Mammary epithelial cell (primary cell): ENCODE measurements at regions of chr12 and their contacts with region 1.

Region 1: GRCh38 chr12:52327052-52327829 is 6.0 kb upstream of the KRT83 start:
- DNase-seq: peak; percentile 97
- H3K4me3 ChIP-seq: no peak overlapping the region
- H3K27ac ChIP-seq: peak overlapping the region; percentile 56
- H3K4me1 ChIP-seq: peaks cover 15% of the 10 kb centered on the region
- H3K27me3 ChIP-seq: no peaks in the 10 kb centered on the region
- CTCF ChIP-seq: peak; percentile 99 to 100

Region 2: GRCh38 chr12:52147367-52147972 is 179.8 kb before region 1 on chr12:
- CTCF ChIA-PET with region 1: interaction called, 13 read pairs
- dilution Hi-C with region 1: no loop called
- in situ Hi-C with region 1: no loop called
- intact Hi-C with region 1: loop called (anchors 1 kb)
- DNase-seq: peak; percentile 99
- H3K4me3 ChIP-seq: no peak overlapping the region
- H3K27ac ChIP-seq: peak overlapping the region; percentile 100
- H3K4me1 ChIP-seq: peaks cover 89% of the 10 kb centered on the region
- H3K27me3 ChIP-seq: no peaks in the 10 kb centered on the region
- CTCF ChIP-seq: no peak

Region 3: GRCh38 chr12:52213512-52214420 is 113.5 kb before region 1 on chr12:
- CTCF ChIA-PET with region 1: interaction called, 3 read pairs
- dilution Hi-C with region 1: no loop called
- in situ Hi-C with region 1: no loop called
- intact Hi-C with region 1: loop called (anchors 1 kb)
- DNase-seq: peak; percentile 79
- H3K4me3 ChIP-seq: no peak overlapping the region
- H3K27ac ChIP-seq: no peak overlapping the region
- H3K4me1 ChIP-seq: peaks cover 73% of the 10 kb centered on the region
- H3K27me3 ChIP-seq: no peaks in the 10 kb centered on the region
- CTCF ChIP-seq: peak; percentile 98 to 100

Region 4: DNA sequence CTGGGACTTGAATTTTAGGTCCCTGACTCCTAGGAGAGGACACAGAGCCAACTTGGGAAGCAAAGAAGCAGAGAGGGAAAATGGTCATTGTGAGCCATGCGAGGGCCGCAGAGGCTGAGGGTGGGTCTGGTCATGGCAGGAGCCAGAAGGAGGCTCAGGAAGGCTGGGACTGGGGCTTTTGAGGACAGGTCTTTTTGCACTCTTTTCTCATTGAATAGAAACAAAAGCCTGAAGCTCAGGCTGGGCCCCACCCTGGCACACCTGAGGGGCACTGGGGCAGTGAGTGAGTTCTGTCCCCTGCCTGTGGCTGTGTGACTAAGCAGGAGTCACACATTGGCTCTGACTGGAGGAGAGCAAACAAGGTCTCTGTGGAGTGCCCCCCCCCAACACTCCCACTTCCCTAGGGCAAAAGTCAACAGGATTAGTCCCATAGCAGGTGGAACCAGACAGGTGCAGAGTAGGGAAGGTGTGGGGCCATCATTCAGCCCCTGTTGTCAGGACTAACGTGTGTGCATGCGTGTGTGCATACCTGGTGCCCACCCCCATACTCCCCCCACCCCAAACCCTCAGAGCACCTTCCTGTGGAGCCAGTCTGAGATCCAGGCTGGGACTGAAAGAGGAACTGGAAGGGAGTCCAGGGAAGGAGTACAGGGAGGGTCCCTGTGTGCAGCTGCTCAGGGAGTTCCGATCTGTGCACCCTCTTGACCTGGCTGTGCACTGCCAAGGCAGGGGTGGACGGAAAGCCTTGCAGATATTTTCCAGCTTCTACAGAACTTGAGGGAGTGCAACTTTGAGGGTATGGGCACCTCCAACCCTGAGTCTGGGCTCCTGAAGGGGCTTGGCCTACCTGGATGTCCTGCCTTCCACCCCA is 91.2 kb before region 1 on chr12:
- CTCF ChIA-PET with region 1: no interaction called
- dilution Hi-C with region 1: loop called (anchors 5 kb)
- in situ Hi-C with region 1: no loop called
- intact Hi-C with region 1: loop called (anchors 1 kb)
- DNase-seq: peak; percentile 51
- H3K4me3 ChIP-seq: peak overlapping the region; percentile 85 to 95 (median 93)
- H3K27ac ChIP-seq: peak overlapping the region; percentile 63
- H3K4me1 ChIP-seq: peaks cover 67% of the 10 kb centered on the region
- H3K27me3 ChIP-seq: no peaks in the 10 kb centered on the region
- CTCF ChIP-seq: no peak

Region 5: DNA sequence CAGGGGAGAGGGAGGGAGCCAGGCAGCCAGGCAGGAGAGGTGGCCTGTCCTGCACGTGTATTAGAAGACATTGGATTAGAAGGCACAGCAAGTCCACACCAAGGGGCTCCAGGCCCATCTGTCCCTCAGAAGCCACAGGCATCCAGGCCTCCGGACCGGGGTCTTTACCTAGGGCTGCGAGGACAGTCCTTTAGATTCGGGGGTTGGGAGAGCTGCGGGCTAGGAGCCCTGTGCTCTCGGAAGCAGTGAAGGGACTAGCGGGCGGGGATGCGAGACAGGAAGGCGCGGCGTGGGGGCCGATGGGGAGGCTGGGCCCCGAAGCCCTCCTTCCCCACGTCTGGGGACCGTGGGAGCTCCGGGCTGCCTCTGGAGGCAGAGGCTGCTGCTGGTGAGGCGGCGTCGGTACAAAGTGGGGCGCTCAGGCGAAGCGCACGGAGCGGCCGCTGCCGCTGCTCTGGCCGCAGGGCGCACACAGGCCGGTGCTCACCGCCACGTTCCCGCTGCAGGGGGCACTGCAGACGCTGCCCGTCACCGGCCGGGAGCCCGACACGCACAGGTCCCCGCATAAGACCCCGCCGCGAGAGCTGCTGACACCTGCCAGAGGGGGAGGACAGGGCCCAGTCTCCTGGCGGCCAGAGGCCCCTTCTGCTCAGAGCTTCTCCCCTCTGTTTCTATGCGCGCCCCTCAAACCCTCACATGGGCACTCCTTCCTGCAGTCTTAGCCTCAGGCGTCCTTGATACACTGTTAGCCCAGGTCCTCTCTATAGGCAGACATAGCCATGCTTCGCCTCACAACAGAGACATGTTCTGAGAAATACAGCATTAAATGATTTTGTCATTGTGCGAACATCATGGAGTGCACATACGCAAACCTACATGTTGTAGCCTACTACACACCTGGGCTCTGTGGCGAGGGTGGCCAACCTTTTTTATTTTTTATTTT is 76.9 kb before region 1 on chr12:
- CTCF ChIA-PET with region 1: no interaction called
- dilution Hi-C with region 1: no loop called
- in situ Hi-C with region 1: loop called in 1 of 2 experiments (anchors 5 kb)
- intact Hi-C with region 1: loop called (anchors 2 kb)
- DNase-seq: no peak
- H3K4me3 ChIP-seq: no peak overlapping the region
- H3K27ac ChIP-seq: no peak overlapping the region
- H3K4me1 ChIP-seq: peaks cover 6% of the 10 kb centered on the region
- H3K27me3 ChIP-seq: no peaks in the 10 kb centered on the region
- CTCF ChIP-seq: no peak

Region 6: GRCh38 chr12:52278541-52279421 is 48.5 kb before region 1 on chr12:
- CTCF ChIA-PET with region 1: interaction called, 6 read pairs
- dilution Hi-C with region 1: no loop called
- in situ Hi-C with region 1: loop called in 1 of 2 experiments (anchors 5 kb)
- intact Hi-C with region 1: loop called (anchors 1 kb)
- DNase-seq: peak; percentile 73
- H3K4me3 ChIP-seq: peak overlapping the region in 1 of 3 experiments; percentile 20
- H3K27ac ChIP-seq: peak overlapping the region; percentile 100
- H3K4me1 ChIP-seq: peaks cover 45% of the 10 kb centered on the region
- H3K27me3 ChIP-seq: no peaks in the 10 kb centered on the region
- CTCF ChIP-seq: peak; percentile 76 to 100

Region 7: DNA sequence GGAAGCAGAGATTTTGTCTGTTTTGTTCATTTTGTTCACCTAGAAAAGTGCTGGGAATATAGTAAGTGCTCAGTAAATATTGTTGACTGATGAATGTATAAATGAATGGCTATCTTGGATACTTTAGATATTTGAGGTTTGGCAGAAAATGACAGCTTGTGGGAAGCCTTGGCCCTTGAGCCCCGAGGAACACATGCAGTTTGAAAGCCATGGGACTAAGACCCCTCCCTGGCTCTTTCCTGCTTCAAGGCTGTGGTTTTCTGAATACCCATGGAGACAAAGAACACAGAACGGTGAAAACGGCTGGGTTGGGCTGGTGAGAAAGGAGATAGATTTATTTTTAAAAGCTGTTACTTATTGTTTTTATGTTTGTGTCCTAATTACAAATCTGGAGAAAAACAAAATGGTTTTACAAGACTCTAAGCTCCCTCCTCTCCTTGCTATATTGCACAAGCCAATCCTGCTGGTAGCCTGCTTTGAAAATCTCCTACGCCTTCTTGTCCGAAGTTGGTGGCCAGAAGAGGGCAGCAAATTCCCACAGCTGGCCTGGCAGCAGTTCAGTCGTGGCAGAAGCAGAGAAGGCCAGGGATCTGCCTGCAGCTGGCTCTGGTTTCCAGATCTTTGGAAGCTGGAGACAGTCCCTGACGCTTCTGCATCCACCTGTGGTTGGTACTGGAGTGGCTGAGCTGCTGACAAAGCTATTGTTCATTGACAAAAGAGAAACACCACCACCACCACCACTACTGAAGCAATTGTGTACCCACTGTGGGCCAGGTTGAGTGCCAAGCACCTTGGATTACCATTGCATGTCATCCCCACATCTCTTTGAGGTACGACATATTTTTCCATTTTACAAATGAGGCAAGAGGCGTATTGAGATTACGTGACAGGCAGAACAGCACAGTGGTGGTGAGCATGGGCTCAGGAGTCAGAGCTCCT is 45.2 kb after region 1 on chr12:
- CTCF ChIA-PET with region 1: no interaction called
- dilution Hi-C with region 1: no loop called
- in situ Hi-C with region 1: no loop called
- intact Hi-C with region 1: loop called (anchors 1 kb)
- DNase-seq: peak; percentile 81
- H3K4me3 ChIP-seq: no peak overlapping the region
- H3K27ac ChIP-seq: no peak overlapping the region
- H3K4me1 ChIP-seq: peaks cover 3% of the 10 kb centered on the region
- H3K27me3 ChIP-seq: no peaks in the 10 kb centered on the region
- CTCF ChIP-seq: peak; percentile 86 to 93